GM12878 (cell line): ENCODE measurements at regions of chr5 and their contacts with region 1.

Region 1: DNA sequence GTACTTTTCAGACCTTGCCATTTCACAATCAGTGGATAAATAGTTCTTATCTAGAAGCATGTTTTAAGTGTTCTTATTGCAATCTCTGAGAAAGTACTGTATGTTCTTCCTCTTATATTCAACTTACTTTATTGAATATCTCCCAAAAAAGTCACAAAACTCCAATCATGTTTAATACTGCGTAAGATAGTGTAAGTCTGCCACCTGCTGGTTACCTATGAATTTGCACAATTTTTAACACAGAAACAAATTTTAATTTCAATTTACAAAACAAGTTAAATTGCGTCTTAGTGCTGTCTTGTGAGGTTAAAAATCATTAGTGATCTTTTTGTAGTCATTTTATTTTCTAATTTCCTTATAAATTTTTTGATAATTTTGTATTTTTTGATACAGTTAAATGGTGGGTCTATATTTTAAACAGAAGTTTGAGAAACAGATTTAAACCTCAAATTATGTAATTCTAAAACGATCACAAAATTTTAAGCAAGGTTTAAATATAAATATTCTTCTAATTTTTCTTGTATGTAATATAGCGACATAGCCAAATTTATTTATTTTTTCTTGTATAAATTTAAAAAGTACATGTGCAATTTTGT is 115.8 kb downstream of the EMB start:
- DNase-seq: no peak
- ATAC-seq: no peak
- H3K4me3 ChIP-seq: no peak overlapping the region
- H3K27ac ChIP-seq: no peak overlapping the region
- H3K4me1 ChIP-seq: no peaks in the 10 kb centered on the region
- H3K27me3 ChIP-seq: no peaks in the 10 kb centered on the region
- CTCF ChIP-seq: peak; percentile 48 to 67 (median 67); a peak in 5 of 6 replicates
- EP300 ChIP-seq: no peak
- POLR2A ChIP-seq: no peak
- RAD21 ChIP-seq: peak; percentile 75

Region 2: GRCh38 chr5:50751064-50751657 is 425.8 kb after region 1 on chr5:
- CTCF ChIA-PET with region 1: interaction called, 9 read pairs
- POLR2A ChIA-PET with region 1: no interaction called
- RAD21 ChIA-PET with region 1: interaction called, 3 read pairs
- SMC1A ChIA-PET with region 1: no interaction called
- in situ Hi-C with region 1: no loop called
- intact Hi-C with region 1: loop called (anchors 2 kb)
- DNase-seq: peak; percentile 27
- ATAC-seq: peak; percentile 97
- H3K4me3 ChIP-seq: no peak overlapping the region
- H3K27ac ChIP-seq: no peak overlapping the region
- H3K4me1 ChIP-seq: no peaks in the 10 kb centered on the region
- H3K27me3 ChIP-seq: no peaks in the 10 kb centered on the region
- CTCF ChIP-seq: peak; percentile 77 to 88 (median 78); a peak in 5 of 6 replicates
- EP300 ChIP-seq: no peak
- POLR2A ChIP-seq: no peak
- RAD21 ChIP-seq: peak; percentile 98